Body of pancreas (tissue), 4 donors: ENCODE measurements at regions of chr6 and their contacts with region 1.

Region 1: DNA sequence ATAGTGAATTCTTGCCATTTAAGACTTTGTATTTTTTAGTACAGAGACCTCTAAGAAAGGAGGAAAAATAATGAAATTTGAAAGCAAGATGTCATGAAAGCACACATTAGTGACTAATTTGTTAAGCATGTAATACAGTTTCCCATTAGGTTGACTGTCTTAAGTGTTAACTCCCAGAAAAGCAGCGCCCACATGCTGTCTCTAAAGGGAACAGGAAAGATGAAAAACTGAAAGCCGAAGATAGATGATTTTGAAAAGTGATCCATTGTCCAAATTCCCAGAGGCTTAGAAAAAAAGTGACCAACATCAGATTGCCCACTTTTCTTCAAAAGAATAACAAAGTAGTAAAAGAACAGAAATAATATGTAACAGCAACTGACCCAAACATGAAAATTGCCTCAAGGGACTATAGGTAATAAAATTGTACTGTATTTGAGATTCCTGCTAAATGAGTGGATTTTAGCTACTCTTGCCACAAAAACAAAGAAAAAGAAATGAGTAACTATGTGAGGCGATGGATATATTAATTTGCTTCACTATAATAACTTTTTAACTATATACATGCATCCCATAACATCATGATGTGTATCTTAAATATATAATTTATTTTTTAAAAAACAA is 83.2 kb upstream of the OGFRL1 start:
- DNase-seq: no peak
- ATAC-seq: no peak
- H3K4me3 ChIP-seq: no peak overlapping the region
- H3K27ac ChIP-seq: no peak overlapping the region
- H3K4me1 ChIP-seq: no peaks in the 10 kb centered on the region
- H3K27me3 ChIP-seq: no peaks in the 10 kb centered on the region
- CTCF ChIP-seq: no peak
- POLR2A ChIP-seq: no peak

Region 2: DNA sequence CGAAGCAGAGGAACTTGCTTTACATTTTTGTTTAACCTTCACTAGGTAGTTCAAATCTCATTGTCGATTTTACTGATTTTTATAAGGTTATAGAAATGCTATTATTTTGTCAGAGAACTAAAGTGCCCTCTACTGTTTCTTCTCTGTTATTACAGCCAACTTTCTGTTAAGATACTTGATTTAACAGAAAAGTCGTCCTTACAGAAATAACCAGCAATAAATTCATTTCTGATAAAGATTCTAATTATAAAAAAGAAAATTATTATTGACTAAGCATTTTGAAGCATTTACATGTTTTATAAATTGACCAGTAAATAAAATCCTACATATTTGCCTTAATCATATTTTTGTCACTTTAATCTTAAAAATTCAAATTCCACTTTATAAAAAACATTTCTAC is 143.9 kb after region 1 on chr6:
- intact Hi-C with region 1: loop called (anchors 10 kb)
- DNase-seq: no peak
- ATAC-seq: no peak
- H3K4me3 ChIP-seq: no peak overlapping the region
- H3K27ac ChIP-seq: no peak overlapping the region
- H3K4me1 ChIP-seq: peaks cover 10% of the 10 kb centered on the region
- H3K27me3 ChIP-seq: no peaks in the 10 kb centered on the region
- CTCF ChIP-seq: peak in 6 of 7 experiments; percentile 57 to 67 (median 61)
- POLR2A ChIP-seq: no peak